ENCODE measurements at regions of chr1 and their contacts with region 1.

Region 1: DNA sequence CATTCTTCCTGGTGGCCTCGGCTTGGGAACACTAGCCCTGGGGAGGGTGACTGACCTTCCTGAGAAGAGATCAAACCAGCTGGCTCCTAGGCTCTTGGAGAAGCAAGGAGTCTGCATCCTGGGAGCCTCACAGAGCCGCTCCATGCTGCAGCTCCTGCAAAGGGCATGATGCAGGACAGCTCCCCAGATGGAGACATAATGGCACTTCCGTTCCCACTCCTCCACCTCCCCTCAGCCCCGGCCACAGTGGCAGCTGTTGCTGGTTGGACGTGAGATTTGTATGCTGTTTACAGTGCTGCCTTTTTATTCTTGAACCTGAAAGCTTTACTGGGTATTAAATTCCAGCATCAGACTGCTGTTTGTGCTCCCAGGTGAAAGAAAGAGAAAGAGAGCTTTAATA is 83.7 kb upstream of the CTTNBP2NL start:
- DNase-seq: no peak
- H3K4me3 ChIP-seq: no peak overlapping the region
- H3K27ac ChIP-seq: no peak overlapping the region
- H3K4me1 ChIP-seq: peaks cover 0 to 2% of the 10 kb centered on the region in 2 donors
- H3K27me3 ChIP-seq: no peaks in the 10 kb centered on the region
- CTCF ChIP-seq: no peak
- POLR2A ChIP-seq: no peak

Region 2: DNA sequence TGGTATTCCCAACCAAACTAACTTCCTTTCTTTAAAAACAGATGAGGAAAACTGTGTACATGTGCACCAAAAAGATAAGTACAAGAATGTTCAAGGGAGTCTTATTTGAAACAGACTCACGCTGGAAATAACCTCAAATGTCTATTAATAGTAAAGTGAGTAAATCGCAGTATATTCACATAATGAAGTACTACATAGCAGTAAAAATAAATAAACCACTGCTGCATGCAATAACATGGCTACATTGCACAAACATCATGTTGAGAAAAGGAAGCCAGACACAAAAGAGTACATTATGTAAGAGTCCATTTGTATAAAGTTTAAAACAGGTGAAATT is 1106.6 kb before region 1 on chr1:
- intact Hi-C with region 1: loop called (anchors 5 kb)
- DNase-seq: no peak
- H3K4me3 ChIP-seq: no peak overlapping the region
- H3K27ac ChIP-seq: peak overlapping the region in 1 of 2 donors; percentile 96
- H3K4me1 ChIP-seq: peaks cover 6 to 11% of the 10 kb centered on the region in 2 donors
- H3K27me3 ChIP-seq: no peaks in the 10 kb centered on the region
- CTCF ChIP-seq: no peak
- POLR2A ChIP-seq: no peak

Measured in breast epithelium (tissue), 4 donors.